ENCODE measurements at regions of chr16 and their contacts with region 1.

Region 1: GRCh38 chr16:53130159-53131049 is 75.6 kb downstream of the CHD9 start:
- DNase-seq: peak; percentile 99
- ATAC-seq: peak; percentile 97
- H3K4me3 ChIP-seq: peak overlapping the region; percentile 96
- H3K27ac ChIP-seq: peak overlapping the region; percentile 89 to 98
- H3K4me1 ChIP-seq: no peaks in the 10 kb centered on the region
- H3K27me3 ChIP-seq: no peaks in the 10 kb centered on the region

Region 2: DNA sequence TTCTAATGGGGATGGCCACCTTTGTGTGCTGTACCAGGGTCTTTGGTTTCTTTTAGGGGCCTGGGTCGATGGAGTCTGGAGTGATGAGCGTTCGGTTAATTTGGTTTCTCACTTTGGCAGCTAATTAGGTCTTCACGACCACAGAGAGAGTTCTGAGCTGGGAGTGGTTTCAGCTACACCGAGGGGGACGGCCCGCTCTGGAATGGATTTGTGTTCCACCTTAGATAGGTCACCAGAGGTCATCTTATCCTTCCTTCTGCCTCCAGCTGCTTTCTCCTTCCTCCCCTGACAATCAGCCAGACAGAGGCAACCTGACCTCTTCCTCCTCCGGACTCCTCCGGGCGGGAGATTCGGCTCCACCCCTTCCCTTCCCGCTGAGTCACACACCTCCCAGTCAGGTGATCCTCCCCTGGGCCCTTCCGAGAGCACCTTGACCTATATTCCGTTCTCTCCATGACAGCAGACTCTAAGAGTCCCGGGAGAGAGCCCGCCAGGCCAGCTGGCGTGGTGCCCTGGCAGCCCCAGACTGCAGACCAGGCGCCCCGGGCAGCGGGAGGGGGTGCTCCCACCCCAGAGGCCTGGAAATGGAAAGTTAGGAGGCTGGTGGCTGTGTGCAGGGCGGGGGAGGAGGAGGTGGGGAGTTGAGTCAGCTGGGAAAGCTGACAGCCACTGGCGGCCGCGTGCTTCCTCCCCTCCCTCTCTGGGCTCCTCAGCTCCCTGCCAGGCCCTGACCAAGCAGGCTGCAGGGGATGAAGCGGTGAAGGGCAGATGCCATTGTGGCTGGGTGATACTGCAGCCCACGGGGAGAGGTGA is 30.9 kb before region 1 on chr16:
- intact Hi-C with region 1: loop called (anchors 2 kb)
- DNase-seq: peak; percentile 94 to 96
- ATAC-seq: peak; percentile 95
- H3K4me3 ChIP-seq: peak overlapping the region in 1 of 2 donors; percentile 18
- H3K27ac ChIP-seq: peak overlapping the region; percentile 64 to 91
- H3K4me1 ChIP-seq: no peaks in the 10 kb centered on the region
- H3K27me3 ChIP-seq: no peaks in the 10 kb centered on the region

Region 3: GRCh38 chr16:53207810-53208752 is 77.7 kb after region 1 on chr16:
- intact Hi-C with region 1: loop called (anchors 5 kb)
- DNase-seq: no peak
- ATAC-seq: peak; percentile 92
- H3K4me3 ChIP-seq: peak overlapping the region; percentile 11 to 69
- H3K27ac ChIP-seq: peak overlapping the region; percentile 67 to 85
- H3K4me1 ChIP-seq: peaks cover 0 to 3% of the 10 kb centered on the region in 2 donors
- H3K27me3 ChIP-seq: no peaks in the 10 kb centered on the region

Measured in aorta (tissue), 5 donors.